Activated CD4-positive, alpha-beta T cell treated with anti-CD3 and anti-CD28 coated beads for 36 hours (primary cell): ENCODE measurements at regions of chr22 and their contacts with region 1.

Region 1: GRCh38 chr22:36331306-36331911 is 56.4 kb downstream of the MYH9 start:
- DNase-seq: peak; percentile 88
- ATAC-seq: peak; percentile 51
- H3K4me3 Mint-ChIP-seq: peak overlapping the region; percentile 77
- H3K27ac Mint-ChIP-seq: peak overlapping the region; percentile 99
- H3K4me1 Mint-ChIP-seq: peaks cover 95% of the 10 kb centered on the region
- H3K27me3 Mint-ChIP-seq: no peaks in the 10 kb centered on the region

Region 2: DNA sequence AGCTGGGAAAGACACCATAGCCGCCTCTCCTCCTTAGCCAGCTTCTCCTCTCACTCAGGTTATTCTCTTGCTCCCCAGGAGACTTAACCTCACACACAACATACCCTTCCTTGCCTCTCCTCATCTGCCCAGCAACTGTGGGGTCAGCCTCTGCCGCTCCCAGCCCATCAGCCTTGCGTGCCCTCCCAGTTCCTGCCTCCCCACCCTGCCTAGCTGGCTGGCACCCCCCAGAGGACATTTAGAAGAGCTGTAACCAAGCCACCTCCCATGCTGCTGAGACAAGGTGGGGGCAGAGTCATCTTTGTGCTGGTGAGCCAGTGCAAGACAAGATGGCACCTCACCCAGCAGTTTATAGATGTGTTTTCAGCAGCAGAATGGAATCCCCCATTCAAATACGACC is 993.5 kb before region 1 on chr22:
- CTCF ChIA-PET with region 1: no interaction called
- POLR2A ChIA-PET with region 1: no interaction called
- intact Hi-C with region 1: no loop called
- DNase-seq: peak; percentile 37
- ATAC-seq: no peak
- H3K4me3 Mint-ChIP-seq: no peak overlapping the region
- H3K27ac Mint-ChIP-seq: peak overlapping the region; percentile 37
- H3K4me1 Mint-ChIP-seq: peaks cover 14% of the 10 kb centered on the region
- H3K27me3 Mint-ChIP-seq: no peaks in the 10 kb centered on the region

Region 3: DNA sequence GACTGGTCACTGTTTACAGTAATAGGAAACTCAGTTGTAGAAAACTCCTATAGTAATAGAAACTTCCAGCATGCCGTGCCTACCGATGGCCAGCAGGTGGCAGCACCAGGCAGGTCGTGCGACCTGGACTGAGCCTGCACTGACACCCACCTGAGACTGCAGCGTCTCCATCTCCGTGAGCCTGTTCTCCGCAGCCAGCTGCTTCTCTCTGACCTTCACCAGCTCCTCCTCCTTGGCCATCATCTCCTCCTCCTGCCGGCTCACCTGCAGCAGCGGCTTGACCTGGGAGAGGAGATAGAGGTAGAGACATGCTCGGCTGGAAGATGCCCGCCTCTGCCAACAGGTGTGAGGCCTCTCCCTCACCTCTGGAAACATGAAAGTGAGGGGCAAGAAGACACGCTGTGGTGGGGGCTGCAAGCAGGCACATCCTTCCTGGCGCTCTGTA is 30.0 kb before region 1 on chr22:
- CTCF ChIA-PET with region 1: interaction called, 12 read pairs
- POLR2A ChIA-PET with region 1: no interaction called
- intact Hi-C with region 1: no loop called
- DNase-seq: peak; percentile 90
- ATAC-seq: peak; percentile 82
- H3K4me3 Mint-ChIP-seq: no peak overlapping the region
- H3K27ac Mint-ChIP-seq: peak overlapping the region; percentile 72
- H3K4me1 Mint-ChIP-seq: peaks cover 7% of the 10 kb centered on the region
- H3K27me3 Mint-ChIP-seq: no peaks in the 10 kb centered on the region

Region 4: GRCh38 chr22:36365020-36365411 is 33.6 kb after region 1 on chr22:
- CTCF ChIA-PET with region 1: interaction called, 11 read pairs
- POLR2A ChIA-PET with region 1: interaction called, 9 read pairs
- intact Hi-C with region 1: loop called (anchors 1 kb)
- DNase-seq: peak; percentile 96
- ATAC-seq: peak; percentile 89
- H3K4me3 Mint-ChIP-seq: peak overlapping the region; percentile 67
- H3K27ac Mint-ChIP-seq: peak overlapping the region; percentile 96
- H3K4me1 Mint-ChIP-seq: peaks cover 99% of the 10 kb centered on the region
- H3K27me3 Mint-ChIP-seq: no peaks in the 10 kb centered on the region

Region 5: DNA sequence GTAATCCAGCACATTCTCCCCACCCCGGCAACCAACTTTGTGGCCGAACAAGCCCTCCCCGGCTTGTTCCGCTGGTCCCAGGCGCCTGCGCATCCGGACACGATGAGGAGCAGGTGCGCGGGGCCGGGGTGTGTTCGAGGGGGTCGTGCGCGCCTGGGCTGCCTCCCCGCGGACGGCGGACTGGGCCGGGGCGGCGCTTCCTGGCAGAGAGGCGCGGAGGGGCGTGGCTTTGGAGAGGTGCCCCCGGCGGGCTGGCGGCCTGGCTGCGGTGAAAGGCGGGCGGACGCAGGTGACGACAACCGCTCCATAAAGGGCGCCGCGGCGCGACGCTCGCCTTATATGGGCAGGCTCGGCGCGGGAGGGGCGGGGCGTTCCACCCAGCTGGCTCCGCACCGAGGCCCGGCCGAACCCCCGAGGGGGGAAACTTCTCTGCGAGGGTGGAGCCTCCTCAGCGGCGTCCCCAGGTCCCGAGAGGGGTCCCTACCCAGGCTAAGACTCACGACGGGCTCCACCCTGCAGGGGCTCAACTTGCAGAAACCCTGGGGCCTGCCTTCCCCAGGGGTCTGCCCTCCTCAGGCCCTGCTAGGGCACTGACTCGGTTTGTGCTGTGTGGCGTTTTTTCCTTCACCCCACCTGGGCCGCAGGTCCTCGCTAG is 123.6 kb after region 1 on chr22:
- CTCF ChIA-PET with region 1: interaction called, 4 read pairs
- POLR2A ChIA-PET with region 1: interaction called, 5 read pairs
- intact Hi-C with region 1: loop called (anchors 1 to 2 kb)
- DNase-seq: peak; percentile 98
- ATAC-seq: peak; percentile 82
- H3K4me3 Mint-ChIP-seq: peak overlapping the region; percentile 71
- H3K27ac Mint-ChIP-seq: peak overlapping the region; percentile 67
- H3K4me1 Mint-ChIP-seq: peaks cover 44% of the 10 kb centered on the region
- H3K27me3 Mint-ChIP-seq: no peaks in the 10 kb centered on the region

Region 6: GRCh38 chr22:36481393-36482168 is 150.2 kb after region 1 on chr22 and contains the start of gene TXN2:
- CTCF ChIA-PET with region 1: interaction called, 7 read pairs
- POLR2A ChIA-PET with region 1: interaction called, 7 read pairs
- intact Hi-C with region 1: loop called in 1 of 2 experiments (anchors 1 kb)
- DNase-seq: peak; percentile 97
- ATAC-seq: peak; percentile 89
- H3K4me3 Mint-ChIP-seq: peak within 1 kb of the TSS; percentile 81
- H3K27ac Mint-ChIP-seq: peak within 1 kb of the TSS; percentile 94
- H3K4me1 Mint-ChIP-seq: peaks cover 19% of the 10 kb centered on the region
- H3K27me3 Mint-ChIP-seq: no peaks in the 10 kb centered on the region
- total RNA-seq, gene TXN2: 95.5 to 99.1 TPM